CD8-positive, alpha-beta T cell (primary cell): ENCODE measurements at regions of chr6 and their contacts with region 1.

Region 1: GRCh38 chr6:111709615-111710398 is 104.1 kb upstream of the TRAF3IP2 start:
- DNase-seq: peak; percentile 29 to 85 (median 57)
- ATAC-seq: peak; percentile 83
- H3K4me3 ChIP-seq: no peak overlapping the region
- H3K4me3 Mint-ChIP-seq: no peak overlapping the region
- H3K27ac ChIP-seq: peak overlapping the region in 1 of 2 experiments; percentile 48
- H3K27ac Mint-ChIP-seq: peak overlapping the region; percentile 85
- H3K4me1 ChIP-seq: peaks cover 30% of the 10 kb centered on the region
- H3K4me1 Mint-ChIP-seq: peaks cover 52% of the 10 kb centered on the region
- H3K27me3 ChIP-seq: no peaks in the 10 kb centered on the region
- H3K27me3 Mint-ChIP-seq: no peaks in the 10 kb centered on the region
- CTCF ChIP-seq: peak; percentile 80

Region 2: DNA sequence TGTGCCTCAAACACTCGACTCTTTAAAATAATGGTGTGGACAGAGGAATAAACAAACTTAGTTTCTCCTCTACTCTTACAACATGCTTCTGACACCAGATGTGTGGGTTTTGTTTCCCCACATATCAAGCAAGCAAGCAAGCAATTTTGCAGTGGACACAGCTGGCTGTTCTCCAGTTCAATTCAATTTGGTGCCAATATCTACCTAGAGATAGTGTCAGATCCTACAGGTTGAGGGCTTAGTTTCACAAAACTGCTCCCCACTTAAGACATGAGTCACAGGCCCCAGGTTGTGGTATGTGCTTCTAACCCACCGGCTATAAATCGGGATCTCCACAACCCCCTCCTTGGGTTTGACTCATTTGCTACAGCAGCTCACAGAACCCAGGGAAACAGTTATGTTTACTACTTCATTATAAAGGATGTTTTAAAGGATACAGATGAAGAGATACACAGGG is 27.3 kb after region 1 on chr6:
- CTCF ChIA-PET with region 1: interaction called, 12 read pairs
- POLR2A ChIA-PET with region 1: interaction called, 3 read pairs
- intact Hi-C with region 1: no loop called
- DNase-seq: peak in 5 of 9 experiments; percentile 51 to 66 (median 56)
- ATAC-seq: peak; percentile 74
- H3K4me3 ChIP-seq: no peak overlapping the region
- H3K4me3 Mint-ChIP-seq: peak overlapping the region; percentile 19
- H3K27ac ChIP-seq: peak overlapping the region in 1 of 2 experiments; percentile 65
- H3K27ac Mint-ChIP-seq: peak overlapping the region; percentile 87
- H3K4me1 ChIP-seq: peaks cover 83% of the 10 kb centered on the region
- H3K4me1 Mint-ChIP-seq: peaks cover 94% of the 10 kb centered on the region
- H3K27me3 ChIP-seq: no peaks in the 10 kb centered on the region
- H3K27me3 Mint-ChIP-seq: no peaks in the 10 kb centered on the region
- CTCF ChIP-seq: no peak

Region 3: GRCh38 chr6:111764238-111765175 is 54.7 kb after region 1 on chr6:
- CTCF ChIA-PET with region 1: interaction called, 9 read pairs
- POLR2A ChIA-PET with region 1: interaction called, 9 read pairs
- intact Hi-C with region 1: loop called in 1 of 2 experiments (anchors 2 kb)
- DNase-seq: peak in 7 of 9 experiments; percentile 45 to 92 (median 70)
- ATAC-seq: peak; percentile 41
- H3K4me3 ChIP-seq: peak overlapping the region in 1 of 2 experiments; percentile 4
- H3K4me3 Mint-ChIP-seq: peak overlapping the region; percentile 70
- H3K27ac ChIP-seq: peak overlapping the region; percentile 41 to 99
- H3K27ac Mint-ChIP-seq: peak overlapping the region; percentile 99
- H3K4me1 ChIP-seq: peaks cover 98% of the 10 kb centered on the region
- H3K4me1 Mint-ChIP-seq: peaks cover 99% of the 10 kb centered on the region
- H3K27me3 ChIP-seq: no peaks in the 10 kb centered on the region
- H3K27me3 Mint-ChIP-seq: no peaks in the 10 kb centered on the region
- CTCF ChIP-seq: no peak

Region 4: DNA sequence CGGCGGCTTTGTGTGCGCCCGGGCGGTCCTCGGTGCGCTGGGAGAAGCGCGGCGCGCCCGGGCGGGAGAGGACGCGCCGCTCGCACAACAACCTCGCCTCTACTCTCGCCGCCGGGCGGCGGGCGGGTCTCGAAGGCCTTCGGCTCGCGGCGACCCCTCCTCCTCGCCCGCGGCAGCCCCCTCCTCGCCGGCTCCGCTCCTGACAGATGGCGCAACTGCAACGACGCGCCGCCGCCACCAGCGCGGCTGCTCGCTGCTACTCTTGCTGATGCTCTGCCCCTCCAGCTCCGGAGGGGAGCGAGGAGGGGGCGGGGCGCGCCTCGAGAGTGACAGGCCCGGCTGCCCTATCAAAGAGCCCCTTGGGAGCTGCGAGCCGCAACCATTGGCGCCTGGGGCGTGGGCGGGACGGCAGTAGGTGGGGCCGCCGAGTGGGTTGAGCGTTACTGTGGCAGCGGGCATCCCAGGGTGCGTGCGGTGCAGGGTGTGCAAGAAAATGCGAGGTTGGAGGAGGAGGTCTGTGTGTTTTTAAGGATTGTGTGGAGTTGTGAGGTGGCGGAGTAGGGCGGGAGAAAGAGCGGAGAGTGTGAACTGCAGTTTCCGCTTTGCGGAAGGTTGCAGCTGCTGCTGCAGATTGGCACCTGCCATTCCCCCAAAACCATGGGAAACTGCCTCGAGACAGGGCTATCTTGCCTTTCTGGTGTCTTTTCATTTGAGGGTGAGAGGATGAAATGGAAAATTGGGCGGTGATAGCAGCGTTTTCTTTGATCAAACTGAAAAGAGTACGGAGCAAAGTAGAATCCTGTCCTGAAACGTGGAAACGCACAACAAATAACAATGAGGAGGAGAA is 163.6 kb after region 1 on chr6 and contains the start of gene FYN:
- CTCF ChIA-PET with region 1: interaction called, 11 read pairs
- POLR2A ChIA-PET with region 1: interaction called, 4 read pairs
- intact Hi-C with region 1: loop called (anchors 1 to 2 kb)
- DNase-seq: peak; percentile 97 to 99 (median 98)
- ATAC-seq: peak; percentile 87
- H3K4me3 ChIP-seq: peak within 1 kb of the TSS; percentile 91 to 94
- H3K4me3 Mint-ChIP-seq: peak within 1 kb of the TSS; percentile 97
- H3K27ac ChIP-seq: peak within 1 kb of the TSS; percentile 86 to 91
- H3K27ac Mint-ChIP-seq: peak within 1 kb of the TSS; percentile 98
- H3K4me1 ChIP-seq: peaks cover 35% of the 10 kb centered on the region
- H3K4me1 Mint-ChIP-seq: peaks cover 41% of the 10 kb centered on the region
- H3K27me3 ChIP-seq: no peaks in the 10 kb centered on the region
- H3K27me3 Mint-ChIP-seq: no peaks in the 10 kb centered on the region
- CTCF ChIP-seq: peak; percentile 42
- total RNA-seq, gene FYN: 479 to 483 TPM

Region 5: GRCh38 chr6:112010328-112010727 is 300.5 kb after region 1 on chr6:
- CTCF ChIA-PET with region 1: interaction called, 16 read pairs
- POLR2A ChIA-PET with region 1: interaction called, 7 read pairs
- intact Hi-C with region 1: no loop called
- DNase-seq: peak in 3 of 9 experiments; percentile 45 to 63 (median 61)
- ATAC-seq: peak; percentile 57
- H3K4me3 ChIP-seq: no peak overlapping the region
- H3K4me3 Mint-ChIP-seq: no peak overlapping the region
- H3K27ac ChIP-seq: no peak overlapping the region
- H3K27ac Mint-ChIP-seq: no peak overlapping the region
- H3K4me1 ChIP-seq: no peaks in the 10 kb centered on the region
- H3K4me1 Mint-ChIP-seq: peaks cover 9% of the 10 kb centered on the region
- H3K27me3 ChIP-seq: no peaks in the 10 kb centered on the region
- H3K27me3 Mint-ChIP-seq: no peaks in the 10 kb centered on the region
- CTCF ChIP-seq: no peak

Region 6: DNA sequence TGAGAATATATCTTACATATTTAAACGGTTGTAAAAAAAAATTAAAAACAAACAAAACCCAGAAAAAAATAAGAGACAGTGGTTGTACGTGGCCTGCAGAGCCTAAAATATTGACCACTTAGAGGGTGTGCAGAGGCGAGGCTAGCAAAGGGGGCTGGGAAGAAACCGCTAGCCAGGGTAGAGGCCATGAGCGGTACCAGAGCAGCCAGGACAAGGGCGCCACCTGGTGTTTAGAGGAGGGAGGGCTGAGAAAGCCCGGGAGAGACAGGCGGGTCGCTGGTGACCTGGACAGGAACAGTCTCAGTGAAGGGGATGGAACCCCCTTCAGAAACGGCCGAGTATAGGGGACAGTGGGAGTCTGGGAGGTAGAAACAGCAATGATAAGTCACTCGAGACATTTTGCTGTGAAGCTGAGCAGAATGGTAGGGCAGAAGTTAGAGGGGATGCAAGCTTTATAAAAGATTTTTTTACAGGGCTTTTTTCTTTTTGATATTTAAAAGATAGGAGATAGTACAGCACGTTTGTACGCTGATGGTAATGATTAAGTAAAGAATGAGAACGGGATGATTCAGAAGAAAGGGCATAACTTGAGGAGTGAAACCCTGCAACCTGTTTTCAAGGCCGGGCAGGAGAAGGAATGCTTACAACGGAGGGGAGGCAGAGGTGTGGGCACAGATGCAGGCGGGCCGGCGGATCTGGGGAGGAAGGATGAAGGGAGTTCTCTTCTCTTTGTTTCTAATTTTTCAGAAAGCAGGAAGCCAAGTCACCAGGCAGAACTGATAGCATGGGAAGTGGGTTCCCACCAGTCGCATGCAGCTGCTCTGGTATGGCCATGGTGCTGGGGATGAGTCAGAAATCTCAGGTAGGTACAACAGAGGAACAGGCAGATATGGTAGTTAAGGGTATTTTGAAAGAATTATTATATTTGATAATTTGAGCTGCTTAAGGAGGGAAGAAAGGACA is 453.8 kb after region 1 on chr6:
- CTCF ChIA-PET with region 1: no interaction called
- POLR2A ChIA-PET with region 1: no interaction called
- intact Hi-C with region 1: loop called (anchors 2 kb)
- DNase-seq: peak; percentile 52 to 83 (median 75)
- ATAC-seq: peak; percentile 96
- H3K4me3 ChIP-seq: no peak overlapping the region
- H3K4me3 Mint-ChIP-seq: peak overlapping the region; percentile 57
- H3K27ac ChIP-seq: no peak overlapping the region
- H3K27ac Mint-ChIP-seq: no peak overlapping the region
- H3K4me1 ChIP-seq: peaks cover 15% of the 10 kb centered on the region
- H3K4me1 Mint-ChIP-seq: peaks cover 14% of the 10 kb centered on the region
- H3K27me3 ChIP-seq: peaks cover 0 to 5% of the 10 kb centered on the region in 2 experiments
- H3K27me3 Mint-ChIP-seq: peaks cover 33% of the 10 kb centered on the region
- CTCF ChIP-seq: peak; percentile 87